CD4-positive, alpha-beta memory T cell (primary cell): ENCODE measurements at regions of chr12 and their contacts with region 1.

Region 1: DNA sequence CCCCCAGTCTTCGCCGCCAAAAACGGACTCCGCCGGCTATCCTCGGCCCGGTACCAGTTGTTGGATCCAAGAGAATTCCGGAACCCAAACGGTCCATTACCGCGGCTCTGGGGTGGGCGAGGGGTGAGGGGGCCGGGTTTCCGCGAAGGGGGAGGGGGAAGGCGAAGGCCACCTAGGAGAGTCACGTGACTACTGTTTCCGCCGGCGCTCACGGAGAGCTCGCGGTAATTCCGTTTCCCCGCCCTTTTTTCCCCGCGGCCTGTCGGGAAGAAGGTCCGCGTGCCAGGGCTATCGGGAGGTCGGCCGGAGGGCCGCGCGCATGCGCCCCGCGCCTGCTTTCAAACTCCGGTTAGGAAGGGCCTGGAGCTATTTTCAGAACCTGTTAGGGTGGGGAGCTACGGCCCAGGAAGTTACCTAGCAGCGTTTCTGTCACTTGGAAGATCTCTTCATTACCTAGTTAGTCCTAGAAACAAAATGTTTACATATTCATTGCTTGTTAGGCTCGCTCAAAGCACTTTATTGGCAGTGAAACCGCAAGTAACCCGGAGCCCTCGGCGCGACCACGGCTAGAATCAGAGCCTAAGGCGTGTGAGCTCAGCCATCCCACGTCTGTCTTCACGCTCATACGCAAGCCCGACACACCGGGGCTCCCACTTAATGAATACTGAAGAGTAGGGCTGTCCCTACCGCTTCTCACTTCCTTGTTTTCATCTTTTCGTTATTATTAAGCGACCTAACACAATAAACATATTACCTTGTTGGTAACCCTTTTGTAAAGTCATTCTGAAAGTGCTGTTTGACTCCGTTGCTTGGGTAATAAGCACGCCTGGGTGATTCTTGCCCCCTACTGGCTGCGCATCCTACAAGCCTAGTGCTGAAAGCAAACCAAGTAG is 624 bp upstream of the SBNO1 start:
- DNase-seq: peak; percentile 98 to 99 (median 99)
- H3K4me3 ChIP-seq: peak overlapping the region; percentile 92 to 94
- H3K4me3 Mint-ChIP-seq: peak overlapping the region; percentile 85 to 96 (median 94)
- H3K27ac ChIP-seq: peak overlapping the region; percentile 85
- H3K27ac Mint-ChIP-seq: peak overlapping the region; percentile 89 to 99 (median 97)
- H3K4me1 ChIP-seq: peaks cover 32% of the 10 kb centered on the region
- H3K4me1 Mint-ChIP-seq: peaks cover 10 to 32% (median 18%) of the 10 kb centered on the region in 4 donors
- H3K27me3 ChIP-seq: no peaks in the 10 kb centered on the region
- H3K27me3 Mint-ChIP-seq: no peaks in the 10 kb centered on the region

Region 2: GRCh38 chr12:122974274-122974891 is 390.9 kb before region 1 on chr12:
- CTCF ChIA-PET with region 1: no interaction called
- POLR2A ChIA-PET with region 1: no interaction called
- intact Hi-C with region 1: loop called (anchors 1 kb)
- DNase-seq: peak; percentile 97 to 99 (median 98)
- H3K4me3 ChIP-seq: peak overlapping the region; percentile 71 to 100
- H3K4me3 Mint-ChIP-seq: peak overlapping the region; percentile 89 to 99 (median 98)
- H3K27ac ChIP-seq: peak overlapping the region; percentile 98
- H3K27ac Mint-ChIP-seq: peak overlapping the region; percentile 98 to 100 (median 99)
- H3K4me1 ChIP-seq: peaks cover 41% of the 10 kb centered on the region
- H3K4me1 Mint-ChIP-seq: peaks cover 10 to 49% (median 30%) of the 10 kb centered on the region in 4 donors
- H3K27me3 ChIP-seq: no peaks in the 10 kb centered on the region
- H3K27me3 Mint-ChIP-seq: no peaks in the 10 kb centered on the region

Region 3: GRCh38 chr12:123346946-123347345 is 18.3 kb before region 1 on chr12:
- CTCF ChIA-PET with region 1: interaction called, 14 read pairs
- POLR2A ChIA-PET with region 1: interaction called, 13 read pairs
- intact Hi-C with region 1: no loop called
- DNase-seq: no peak
- H3K4me3 ChIP-seq: no peak overlapping the region
- H3K4me3 Mint-ChIP-seq: no peak overlapping the region
- H3K27ac ChIP-seq: no peak overlapping the region
- H3K27ac Mint-ChIP-seq: no peak overlapping the region
- H3K4me1 ChIP-seq: peaks cover 7% of the 10 kb centered on the region
- H3K4me1 Mint-ChIP-seq: peaks cover 8 to 22% (median 15%) of the 10 kb centered on the region in 4 donors
- H3K27me3 ChIP-seq: no peaks in the 10 kb centered on the region
- H3K27me3 Mint-ChIP-seq: no peaks in the 10 kb centered on the region

Region 4: GRCh38 chr12:123436017-123436964 is 71.0 kb after region 1 on chr12 and contains the start of gene RILPL2:
- CTCF ChIA-PET with region 1: interaction called, 9 read pairs
- POLR2A ChIA-PET with region 1: interaction called, 11 read pairs
- intact Hi-C with region 1: loop called (anchors 2 kb)
- DNase-seq: peak; percentile 92 to 97 (median 94)
- H3K4me3 ChIP-seq: peak within 1 kb of the TSS; percentile 79 to 95
- H3K4me3 Mint-ChIP-seq: peak within 1 kb of the TSS; percentile 93 to 97 (median 95)
- H3K27ac ChIP-seq: peak within 1 kb of the TSS; percentile 98
- H3K27ac Mint-ChIP-seq: peak within 1 kb of the TSS; percentile 88 to 99 (median 96)
- H3K4me1 ChIP-seq: peaks cover 52% of the 10 kb centered on the region
- H3K4me1 Mint-ChIP-seq: peaks cover 23 to 63% (median 42%) of the 10 kb centered on the region in 4 donors
- H3K27me3 ChIP-seq: no peaks in the 10 kb centered on the region
- H3K27me3 Mint-ChIP-seq: no peaks in the 10 kb centered on the region
- total RNA-seq, gene RILPL2: 11.6 to 11.9 TPM

Region 5: DNA sequence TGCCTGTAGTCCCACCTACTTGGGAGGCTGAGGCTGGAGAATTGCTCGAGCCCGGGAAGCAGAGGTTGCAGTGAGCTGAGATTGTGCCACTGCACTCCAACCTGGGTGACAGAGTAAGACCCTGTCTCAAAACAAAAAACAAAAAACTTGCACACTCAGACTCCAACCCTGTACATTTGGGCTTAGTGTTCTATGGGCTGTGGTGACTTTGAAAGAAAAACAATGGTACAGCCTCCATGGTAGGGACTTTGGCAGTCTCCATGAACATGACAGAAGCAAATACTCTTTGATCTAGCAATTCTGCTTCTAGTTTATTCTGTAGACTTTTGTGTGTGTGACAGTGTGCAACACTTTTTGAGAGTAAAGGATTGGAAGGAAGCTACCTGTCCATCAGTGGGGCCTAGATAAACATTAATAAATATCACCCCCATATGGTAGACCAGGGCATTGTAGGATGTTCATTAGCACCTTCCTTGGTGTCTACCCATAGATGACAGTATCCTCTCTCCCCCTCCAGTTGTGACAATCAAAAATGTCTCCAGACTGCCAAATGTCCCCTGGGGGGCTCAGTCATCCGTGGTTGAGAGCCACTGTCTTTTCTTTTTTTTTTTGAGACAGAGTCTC is 103.4 kb after region 1 on chr12:
- CTCF ChIA-PET with region 1: interaction called, 11 read pairs
- POLR2A ChIA-PET with region 1: interaction called, 13 read pairs
- intact Hi-C with region 1: no loop called
- DNase-seq: peak in 3 of 5 donors; percentile 33 to 39 (median 37)
- H3K4me3 ChIP-seq: no peak overlapping the region
- H3K4me3 Mint-ChIP-seq: no peak overlapping the region
- H3K27ac ChIP-seq: no peak overlapping the region
- H3K27ac Mint-ChIP-seq: peak overlapping the region in 3 of 7 donors; percentile 24 to 42 (median 31)
- H3K4me1 ChIP-seq: peaks cover 4% of the 10 kb centered on the region
- H3K4me1 Mint-ChIP-seq: peaks cover 9 to 24% (median 14%) of the 10 kb centered on the region in 4 donors
- H3K27me3 ChIP-seq: no peaks in the 10 kb centered on the region
- H3K27me3 Mint-ChIP-seq: no peaks in the 10 kb centered on the region

Region 6: GRCh38 chr12:123601602-123602489 is 236.6 kb after region 1 on chr12 and contains the start of gene DDX55:
- CTCF ChIA-PET with region 1: interaction called, 10 read pairs
- POLR2A ChIA-PET with region 1: interaction called, 12 read pairs
- intact Hi-C with region 1: loop called (anchors 1 kb)
- DNase-seq: peak; percentile 84 to 87 (median 86)
- H3K4me3 ChIP-seq: peak within 1 kb of the TSS; percentile 97 to 99
- H3K4me3 Mint-ChIP-seq: peak within 1 kb of the TSS; percentile 90 to 99 (median 96)
- H3K27ac ChIP-seq: peak within 1 kb of the TSS; percentile 92
- H3K27ac Mint-ChIP-seq: peak within 1 kb of the TSS; percentile 91 to 96 (median 95)
- H3K4me1 ChIP-seq: peaks cover 27% of the 10 kb centered on the region
- H3K4me1 Mint-ChIP-seq: peaks cover 18 to 42% (median 29%) of the 10 kb centered on the region in 4 donors
- H3K27me3 ChIP-seq: no peaks in the 10 kb centered on the region
- H3K27me3 Mint-ChIP-seq: no peaks in the 10 kb centered on the region
- total RNA-seq, gene DDX55: 50.5 to 58.7 TPM